CD4-positive, alpha-beta T cell (primary cell): ENCODE measurements at regions of chr6 and their contacts with region 1.

Region 1: GRCh38 chr6:122491919-122492555 is 20.4 kb upstream of the SERINC1 start:
- DNase-seq: peak; percentile 52 to 80 (median 60)
- ATAC-seq: peak; percentile 100
- H3K4me3 ChIP-seq: no peak overlapping the region
- H3K4me3 Mint-ChIP-seq: no peak overlapping the region
- H3K27ac ChIP-seq: no peak overlapping the region
- H3K27ac Mint-ChIP-seq: no peak overlapping the region
- H3K4me1 ChIP-seq: peaks cover 5% of the 10 kb centered on the region
- H3K4me1 Mint-ChIP-seq: peaks cover 5% of the 10 kb centered on the region
- H3K27me3 ChIP-seq: no peaks in the 10 kb centered on the region
- H3K27me3 Mint-ChIP-seq: peaks cover 9% of the 10 kb centered on the region
- CTCF ChIP-seq: peak; percentile 80

Region 2: GRCh38 chr6:120646101-120646500 is 1845.9 kb before region 1 on chr6:
- CTCF ChIA-PET with region 1: no interaction called
- POLR2A ChIA-PET with region 1: no interaction called
- intact Hi-C with region 1: no loop called
- DNase-seq: no peak
- ATAC-seq: no peak
- H3K4me3 ChIP-seq: no peak overlapping the region
- H3K4me3 Mint-ChIP-seq: no peak overlapping the region
- H3K27ac ChIP-seq: no peak overlapping the region
- H3K27ac Mint-ChIP-seq: no peak overlapping the region
- H3K4me1 ChIP-seq: no peaks in the 10 kb centered on the region
- H3K4me1 Mint-ChIP-seq: no peaks in the 10 kb centered on the region
- H3K27me3 ChIP-seq: no peaks in the 10 kb centered on the region
- H3K27me3 Mint-ChIP-seq: no peaks in the 10 kb centered on the region
- CTCF ChIP-seq: no peak

Region 3: DNA sequence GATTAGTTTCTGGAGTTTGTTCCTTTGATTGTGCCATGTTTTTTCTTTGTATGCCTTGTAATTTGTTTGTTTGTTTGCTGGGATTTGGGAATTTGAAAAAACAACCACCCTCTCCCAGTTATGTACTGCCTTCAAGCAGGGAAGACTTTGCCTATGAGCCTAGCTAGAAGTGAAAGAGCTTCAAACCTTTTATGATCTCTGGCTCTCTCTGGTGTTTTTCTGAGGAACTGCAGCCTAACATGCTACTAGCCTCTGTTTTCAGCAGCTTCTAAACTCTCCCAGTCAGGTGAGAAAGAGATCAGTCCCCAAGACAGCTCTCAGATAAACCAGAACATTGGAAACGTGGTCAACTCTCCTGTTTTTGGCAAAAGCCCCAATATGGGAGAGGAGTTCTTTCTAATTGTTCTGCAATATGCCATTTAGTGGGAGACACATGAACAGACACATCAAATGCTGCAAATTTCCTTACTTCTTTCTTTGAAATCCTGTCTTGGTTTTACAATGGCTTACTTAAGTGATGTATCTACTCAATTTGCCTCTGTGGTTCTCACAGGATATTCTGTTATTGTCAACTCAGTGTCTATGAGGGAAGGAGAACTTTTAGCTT is 38.5 kb after region 1 on chr6:
- CTCF ChIA-PET with region 1: interaction called, 44 read pairs
- POLR2A ChIA-PET with region 1: interaction called, 4 read pairs
- intact Hi-C with region 1: loop called (anchors 1 to 2 kb)
- DNase-seq: peak in 13 of 14 experiments; percentile 1 to 77 (median 40)
- ATAC-seq: peak; percentile 94
- H3K4me3 ChIP-seq: no peak overlapping the region
- H3K4me3 Mint-ChIP-seq: no peak overlapping the region
- H3K27ac ChIP-seq: no peak overlapping the region
- H3K27ac Mint-ChIP-seq: no peak overlapping the region
- H3K4me1 ChIP-seq: no peaks in the 10 kb centered on the region
- H3K4me1 Mint-ChIP-seq: no peaks in the 10 kb centered on the region
- H3K27me3 ChIP-seq: peaks cover 2 to 7% of the 10 kb centered on the region in 2 experiments
- H3K27me3 Mint-ChIP-seq: peaks cover 26% of the 10 kb centered on the region
- CTCF ChIP-seq: peak; percentile 97

Region 4: DNA sequence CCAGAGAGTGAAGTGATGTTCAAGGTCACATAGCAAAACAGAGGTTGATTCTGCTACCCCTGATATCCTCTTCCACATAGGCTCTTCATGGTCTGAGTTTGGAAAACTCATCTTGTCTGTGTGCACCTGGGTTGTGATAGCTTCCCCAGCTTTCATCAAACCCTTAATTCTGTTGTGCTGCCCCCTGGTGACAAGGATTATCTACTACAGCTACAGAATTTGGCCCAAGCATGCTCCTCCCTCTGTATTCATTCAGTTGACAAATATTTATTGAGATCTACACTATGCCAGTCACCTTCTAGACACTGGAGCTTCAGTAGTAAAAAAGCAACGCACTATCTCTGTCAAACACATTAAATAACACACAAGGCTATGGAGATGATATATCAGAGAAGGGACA is 347.4 kb after region 1 on chr6:
- CTCF ChIA-PET with region 1: interaction called, 7 read pairs
- POLR2A ChIA-PET with region 1: interaction called, 3 read pairs
- intact Hi-C with region 1: loop called (anchors 5 kb)
- DNase-seq: peak in 12 of 14 experiments; percentile 1 to 63 (median 16)
- ATAC-seq: peak; percentile 60
- H3K4me3 ChIP-seq: no peak overlapping the region
- H3K4me3 Mint-ChIP-seq: no peak overlapping the region
- H3K27ac ChIP-seq: no peak overlapping the region
- H3K27ac Mint-ChIP-seq: no peak overlapping the region
- H3K4me1 ChIP-seq: no peaks in the 10 kb centered on the region
- H3K4me1 Mint-ChIP-seq: no peaks in the 10 kb centered on the region
- H3K27me3 ChIP-seq: no peaks in the 10 kb centered on the region
- H3K27me3 Mint-ChIP-seq: peaks cover 14% of the 10 kb centered on the region
- CTCF ChIP-seq: peak; percentile 39

Region 5: DNA sequence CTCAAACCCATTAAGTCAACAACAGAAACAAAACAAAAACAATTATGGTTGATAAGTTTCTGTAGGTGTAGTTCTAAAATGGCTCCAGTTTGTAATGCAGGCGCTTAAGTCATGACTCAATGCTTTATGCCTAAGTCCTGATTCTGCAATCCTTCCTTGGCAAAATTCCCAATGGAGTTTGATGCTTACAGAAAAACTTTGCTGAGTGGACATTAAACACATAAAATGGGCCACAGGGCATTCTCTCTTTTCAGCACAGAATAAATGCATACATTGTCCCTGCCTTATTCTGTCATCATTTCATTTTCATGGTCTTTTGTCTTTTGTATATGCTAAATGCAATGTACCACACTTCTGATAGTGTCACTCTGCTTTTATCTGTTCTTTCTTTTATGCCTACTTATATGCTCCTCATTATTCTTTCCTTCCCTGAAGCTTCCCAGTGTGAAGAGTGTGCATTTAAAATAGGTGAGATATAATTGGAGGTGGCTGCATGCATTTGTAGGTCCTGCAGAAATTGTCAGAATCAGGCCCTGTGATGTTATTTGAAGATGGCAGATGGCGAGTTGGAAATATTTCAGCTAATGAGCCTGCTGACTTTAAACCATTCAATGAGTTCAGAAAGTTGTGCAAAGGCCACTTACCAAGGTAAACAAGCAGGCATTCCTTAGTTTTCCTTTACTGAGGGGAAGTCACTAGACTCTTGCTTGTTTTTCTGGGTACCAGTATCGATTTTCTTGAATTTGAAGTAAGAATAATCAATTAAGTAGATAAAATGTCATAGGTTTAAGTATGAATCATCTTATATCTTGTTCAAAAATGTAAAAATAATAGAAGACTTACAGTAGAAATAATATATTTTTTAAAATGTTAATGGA is 831.7 kb after region 1 on chr6:
- CTCF ChIA-PET with region 1: no interaction called
- POLR2A ChIA-PET with region 1: no interaction called
- intact Hi-C with region 1: loop called in 1 of 2 experiments (anchors 5 kb)
- DNase-seq: no peak
- ATAC-seq: no peak
- H3K4me3 ChIP-seq: no peak overlapping the region
- H3K4me3 Mint-ChIP-seq: no peak overlapping the region
- H3K27ac ChIP-seq: no peak overlapping the region
- H3K27ac Mint-ChIP-seq: no peak overlapping the region
- H3K4me1 ChIP-seq: no peaks in the 10 kb centered on the region
- H3K4me1 Mint-ChIP-seq: no peaks in the 10 kb centered on the region
- H3K27me3 ChIP-seq: no peaks in the 10 kb centered on the region
- H3K27me3 Mint-ChIP-seq: no peaks in the 10 kb centered on the region
- CTCF ChIP-seq: no peak